ENCODE measurements at regions of chr9 and their contacts with region 1.

Region 1: GRCh38 chr9:37485389-37486219 is at the start of gene POLR1E:
- DNase-seq: peak; percentile 99
- H3K4me3 Mint-ChIP-seq: peak within 1 kb of the TSS; percentile 91
- H3K27ac Mint-ChIP-seq: peak within 1 kb of the TSS; percentile 94
- H3K4me1 Mint-ChIP-seq: peaks cover 33% of the 10 kb centered on the region
- H3K27me3 Mint-ChIP-seq: peaks cover 9% of the 10 kb centered on the region
- total RNA-seq, gene POLR1E: 60.0 and 64.0 TPM in 2 replicates

Region 2: DNA sequence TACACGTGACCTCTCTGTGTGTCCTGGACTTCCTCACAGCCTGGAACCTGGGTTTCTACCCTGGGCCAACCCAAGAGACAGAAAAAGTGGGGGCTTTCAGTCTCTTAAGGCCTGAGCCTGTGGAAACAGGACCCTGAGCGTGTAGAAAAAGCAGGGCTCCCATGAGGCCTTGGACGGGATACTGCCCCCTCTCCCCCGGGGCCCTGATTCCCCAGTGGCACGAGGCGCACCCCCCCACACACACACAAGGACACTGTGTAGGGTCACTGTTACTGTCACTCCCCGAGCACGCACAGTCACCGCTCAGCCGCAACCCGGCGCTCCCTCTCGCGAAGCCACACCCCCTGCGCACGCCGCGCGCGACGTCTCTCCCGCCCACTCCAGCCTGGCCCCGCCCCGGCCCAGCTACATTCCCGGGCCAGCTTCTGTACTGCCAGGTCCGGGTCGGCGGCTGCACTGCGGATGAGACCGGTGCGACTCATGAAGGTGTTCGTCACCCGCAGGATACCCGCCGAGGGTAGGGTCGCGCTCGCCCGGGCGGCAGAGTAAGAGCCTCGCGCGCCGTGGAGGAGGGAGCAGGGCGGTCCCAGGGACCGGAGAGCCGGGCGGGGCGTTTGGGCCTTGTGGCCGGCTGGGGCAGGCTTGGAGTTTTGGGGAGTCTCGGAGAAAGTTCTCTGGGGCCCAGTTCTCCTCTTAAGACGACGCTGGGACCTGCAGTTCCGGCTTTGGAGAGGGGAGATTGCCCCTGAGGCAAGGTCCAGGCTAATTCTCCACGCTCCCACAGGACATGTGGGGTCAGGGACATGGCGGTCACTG is 63.1 kb before region 1 on chr9 and contains the start of gene GRHPR:
- intact Hi-C with region 1: loop called (anchors 2 kb)
- DNase-seq: peak; percentile 97
- H3K4me3 Mint-ChIP-seq: peak within 1 kb of the TSS; percentile 96
- H3K27ac Mint-ChIP-seq: peak within 1 kb of the TSS; percentile 97
- H3K4me1 Mint-ChIP-seq: peaks cover 18% of the 10 kb centered on the region
- H3K27me3 Mint-ChIP-seq: no peaks in the 10 kb centered on the region
- total RNA-seq, gene GRHPR: 72.5 and 76.5 TPM in 2 replicates

Region 3: GRCh38 chr9:37575921-37576721 is 90.5 kb after region 1 on chr9 and contains the start of gene FBXO10:
- intact Hi-C with region 1: loop called (anchors 5 kb)
- DNase-seq: peak; percentile 88
- H3K4me3 Mint-ChIP-seq: peak within 1 kb of the TSS; percentile 90
- H3K27ac Mint-ChIP-seq: peak within 1 kb of the TSS; percentile 31
- H3K4me1 Mint-ChIP-seq: peaks cover 22% of the 10 kb centered on the region
- H3K27me3 Mint-ChIP-seq: peaks cover 10% of the 10 kb centered on the region
- total RNA-seq, gene FBXO10: 1.9 and 2.7 TPM in 2 replicates

Measured in activated CD4-positive, alpha-beta T cell treated with anti-CD3 and anti-CD28 coated beads, Interleukin-2, amount 10 ng/mL, durations not matched to agents 24 days and 14 days (primary cell).